Motor neuron (in vitro differentiated cells): ENCODE measurements at regions of chr11 and their contacts with region 1.

Region 1: DNA sequence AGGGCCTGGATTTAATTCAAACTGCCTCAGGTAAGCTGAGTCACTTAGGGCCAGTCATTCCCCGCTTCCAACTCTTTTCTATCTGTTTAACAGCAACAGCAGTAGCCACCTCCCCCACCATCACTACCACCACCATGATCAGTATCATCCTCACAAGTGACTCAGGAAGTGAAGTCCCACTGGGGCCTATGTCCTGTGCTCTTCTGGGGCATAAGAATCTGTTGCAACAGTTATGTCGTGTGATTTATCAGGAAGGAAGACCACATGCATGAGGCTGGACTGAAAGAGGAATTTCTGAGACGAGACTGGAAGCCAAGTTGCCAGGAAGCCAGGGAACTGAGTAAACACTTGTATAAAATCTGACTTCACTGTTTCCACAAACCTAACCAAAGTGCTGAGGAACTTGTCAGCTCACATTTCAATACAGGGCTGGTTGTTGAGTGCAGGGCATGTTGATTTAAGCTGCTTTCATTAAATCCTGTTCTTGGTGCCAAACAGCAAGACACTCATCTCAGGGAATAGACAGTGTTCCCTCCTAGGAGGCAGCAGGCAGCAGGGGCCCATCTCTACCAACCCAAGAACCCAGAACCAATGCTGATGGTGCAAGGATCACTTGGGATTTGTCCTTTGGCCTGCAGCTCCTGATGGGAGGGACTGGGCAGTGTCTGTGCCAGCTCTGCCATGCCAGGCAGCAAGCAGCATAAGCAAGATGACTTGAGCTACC is 226.7 kb upstream of the NARS2 start:
- ATAC-seq: peak in 5 of 8 experiments; percentile 17 to 85 (median 70)
- H3K4me3 ChIP-seq: no peak overlapping the region
- H3K27ac ChIP-seq: peak overlapping the region in 1 of 2 donors; percentile 49
- H3K4me1 ChIP-seq: peaks cover 22 to 29% of the 10 kb centered on the region in 2 donors

Region 2: GRCh38 chr11:78379039-78379670 is 422.2 kb before region 1 on chr11:
- in situ Hi-C with region 1: no loop called
- ATAC-seq: peak in 1 of 8 experiments; percentile 26
- H3K4me3 ChIP-seq: no peak overlapping the region
- H3K27ac ChIP-seq: no peak overlapping the region
- H3K4me1 ChIP-seq: no peaks in the 10 kb centered on the region

Region 3: GRCh38 chr11:78615719-78616118 is 185.6 kb before region 1 on chr11:
- in situ Hi-C with region 1: no loop called
- ATAC-seq: no peak
- H3K4me3 ChIP-seq: no peak overlapping the region
- H3K27ac ChIP-seq: no peak overlapping the region
- H3K4me1 ChIP-seq: no peaks in the 10 kb centered on the region

Region 4: GRCh38 chr11:78851878-78852586 is 50.7 kb after region 1 on chr11:
- in situ Hi-C with region 1: no loop called
- ATAC-seq: peak in 2 of 8 experiments; percentile 20 to 49
- H3K4me3 ChIP-seq: no peak overlapping the region
- H3K27ac ChIP-seq: no peak overlapping the region
- H3K4me1 ChIP-seq: peaks cover 2 to 12% of the 10 kb centered on the region in 2 donors

Region 5: DNA sequence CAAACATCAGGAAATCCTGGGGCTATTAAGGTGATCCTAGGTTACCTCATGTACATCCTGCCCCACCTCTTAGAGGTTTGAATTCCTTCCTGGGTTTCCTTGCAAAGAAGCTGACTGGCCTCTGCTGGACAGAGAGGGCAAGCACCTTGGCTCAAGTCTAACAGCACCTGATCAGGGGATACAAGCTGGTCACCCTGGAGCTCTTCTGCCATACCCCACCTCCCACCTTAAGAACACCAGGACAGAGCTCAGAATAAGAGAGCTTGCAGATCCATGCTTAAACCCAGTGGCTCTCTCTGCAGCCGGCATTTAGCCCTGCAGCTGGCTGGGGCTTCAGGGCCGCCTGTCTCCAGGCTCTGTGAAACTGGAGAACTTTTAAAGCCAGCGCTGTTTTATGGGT is 159.9 kb after region 1 on chr11:
- in situ Hi-C with region 1: loop called in 1 of 9 experiments (anchors 25 kb)
- ATAC-seq: peak in 4 of 8 experiments; percentile 10 to 81 (median 69)
- H3K4me3 ChIP-seq: no peak overlapping the region
- H3K27ac ChIP-seq: no peak overlapping the region
- H3K4me1 ChIP-seq: peaks cover 16 to 38% of the 10 kb centered on the region in 2 donors

Region 6: GRCh38 chr11:79062814-79063762 is 261.8 kb after region 1 on chr11:
- in situ Hi-C with region 1: loop called in 1 of 9 experiments (anchors 25 kb)
- ATAC-seq: peak in 7 of 8 experiments; percentile 23 to 54 (median 40)
- H3K4me3 ChIP-seq: no peak overlapping the region
- H3K27ac ChIP-seq: peak overlapping the region in 1 of 2 donors; percentile 66
- H3K4me1 ChIP-seq: peaks cover 52 to 59% of the 10 kb centered on the region in 2 donors